Aorta (tissue), 5 donors: ENCODE measurements at regions of chr17 and their contacts with region 1.

Region 1: DNA sequence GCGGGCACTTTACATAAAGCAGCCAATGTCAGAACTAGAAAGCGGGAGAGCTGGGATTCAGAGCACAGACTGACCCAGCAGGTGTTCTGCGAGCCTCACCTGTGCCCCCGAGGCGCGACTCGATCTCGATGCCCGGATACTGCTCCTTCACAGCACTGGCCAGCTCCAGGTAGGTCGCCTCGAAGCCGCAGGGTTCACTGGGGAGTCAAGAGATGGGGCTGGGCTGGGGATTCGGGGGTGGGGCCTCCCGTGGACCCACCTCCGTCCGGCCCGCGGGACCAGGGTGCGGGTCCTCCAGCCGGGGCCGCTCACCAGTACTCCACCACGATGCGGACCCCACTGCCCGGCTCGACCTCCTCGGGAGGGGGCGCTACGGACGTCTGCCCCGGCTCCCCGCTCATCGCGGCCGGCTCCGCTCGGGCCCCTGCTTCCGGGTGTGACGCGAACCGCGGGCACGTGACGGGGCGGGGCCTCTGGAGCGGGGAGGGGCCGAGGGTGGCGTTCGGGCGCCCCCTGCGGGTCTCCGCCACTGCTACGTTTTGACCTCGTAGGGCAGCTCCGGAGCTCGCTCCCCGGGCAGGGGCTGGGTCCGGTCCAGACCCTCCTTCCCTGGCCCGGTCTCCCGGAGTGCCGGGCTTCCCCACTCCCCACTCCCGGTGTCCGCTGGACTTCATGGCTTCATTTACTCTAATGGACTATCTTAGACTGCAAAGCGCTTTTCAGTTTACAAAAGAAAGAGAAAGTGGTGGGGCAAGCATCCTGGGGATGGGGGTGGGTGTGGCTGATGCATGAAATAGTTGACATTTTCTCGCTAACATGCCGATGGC is at the start of gene MIEN1:
- DNase-seq: peak; percentile 93 to 98
- ATAC-seq: peak; percentile 98
- H3K4me3 ChIP-seq: peak within 1 kb of the TSS; percentile 34 to 66
- H3K27ac ChIP-seq: peak within 1 kb of the TSS in 1 of 2 donors; percentile 60
- H3K4me1 ChIP-seq: no peaks in the 10 kb centered on the region
- H3K27me3 ChIP-seq: no peaks in the 10 kb centered on the region
- total RNA-seq, gene MIEN1: 21.6 to 28.2 TPM

Region 2: GRCh38 chr17:39621523-39622379 is 108.6 kb before region 1 on chr17:
- intact Hi-C with region 1: loop called (anchors 5 kb)
- DNase-seq: peak; percentile 85 to 94
- ATAC-seq: peak; percentile 90
- H3K4me3 ChIP-seq: no peak overlapping the region
- H3K27ac ChIP-seq: no peak overlapping the region
- H3K4me1 ChIP-seq: no peaks in the 10 kb centered on the region
- H3K27me3 ChIP-seq: no peaks in the 10 kb centered on the region

Region 3: DNA sequence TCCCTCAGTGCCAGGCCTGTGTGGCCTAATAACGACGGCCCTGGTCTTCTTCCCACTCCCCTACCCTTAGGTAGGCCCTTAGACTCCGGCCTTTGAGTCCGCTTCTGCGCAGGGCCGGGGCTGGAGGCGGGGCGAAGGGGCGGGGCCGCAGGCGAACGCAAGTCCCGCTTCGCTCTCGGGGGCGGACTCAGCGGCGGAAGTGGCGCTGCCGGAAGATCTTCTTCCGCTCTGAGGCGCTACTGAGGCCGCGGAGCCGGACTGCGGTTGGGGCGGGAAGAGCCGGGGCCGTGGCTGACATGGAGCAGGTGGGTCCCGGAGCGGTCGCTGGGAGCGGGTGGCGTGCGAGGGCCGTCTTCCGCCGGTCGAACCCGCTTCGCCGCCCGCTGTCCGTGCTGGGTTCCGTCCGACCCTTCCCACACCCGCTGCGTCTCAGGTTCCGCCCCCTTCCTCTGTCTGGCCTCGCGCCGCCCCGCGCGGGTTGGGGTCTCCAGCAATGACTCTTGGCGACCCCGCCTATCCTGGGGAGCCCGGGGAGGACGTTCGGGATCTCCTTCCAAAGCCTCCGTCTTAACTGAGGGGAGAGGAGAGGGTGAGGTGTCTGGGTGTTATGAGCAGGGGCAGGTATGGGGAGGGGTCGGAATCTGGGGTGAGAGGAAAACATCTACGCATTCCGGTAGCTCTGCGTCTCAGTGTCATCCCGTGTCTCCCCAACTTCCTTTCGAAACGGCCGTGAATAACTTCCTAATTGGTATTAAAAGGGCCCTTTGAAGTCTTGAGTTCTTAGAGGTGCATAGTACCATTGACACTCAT is 93.2 kb before region 1 on chr17 and contains the start of gene STARD3:
- intact Hi-C with region 1: loop called (anchors 5 kb)
- DNase-seq: peak; percentile 96 to 98
- ATAC-seq: peak; percentile 94
- H3K4me3 ChIP-seq: peak within 1 kb of the TSS; percentile 78 to 91
- H3K27ac ChIP-seq: peak within 1 kb of the TSS in 1 of 2 donors; percentile 55
- H3K4me1 ChIP-seq: no peaks in the 10 kb centered on the region
- H3K27me3 ChIP-seq: no peaks in the 10 kb centered on the region
- total RNA-seq, gene STARD3: 34.7 to 58.1 TPM

Region 4: GRCh38 chr17:39668199-39668966 is 61.9 kb before region 1 on chr17 and contains the start of gene PNMT:
- intact Hi-C with region 1: loop called in 1 of 2 experiments (anchors 5 kb)
- DNase-seq: peak; percentile 80 to 93
- ATAC-seq: no peak
- H3K4me3 ChIP-seq: no peak within 1 kb of the TSS
- H3K27ac ChIP-seq: peak within 1 kb of the TSS in 1 of 2 donors; percentile 15
- H3K4me1 ChIP-seq: no peaks in the 10 kb centered on the region
- H3K27me3 ChIP-seq: no peaks in the 10 kb centered on the region
- total RNA-seq, gene PNMT: 0.75 to 1.5 TPM

Region 5: DNA sequence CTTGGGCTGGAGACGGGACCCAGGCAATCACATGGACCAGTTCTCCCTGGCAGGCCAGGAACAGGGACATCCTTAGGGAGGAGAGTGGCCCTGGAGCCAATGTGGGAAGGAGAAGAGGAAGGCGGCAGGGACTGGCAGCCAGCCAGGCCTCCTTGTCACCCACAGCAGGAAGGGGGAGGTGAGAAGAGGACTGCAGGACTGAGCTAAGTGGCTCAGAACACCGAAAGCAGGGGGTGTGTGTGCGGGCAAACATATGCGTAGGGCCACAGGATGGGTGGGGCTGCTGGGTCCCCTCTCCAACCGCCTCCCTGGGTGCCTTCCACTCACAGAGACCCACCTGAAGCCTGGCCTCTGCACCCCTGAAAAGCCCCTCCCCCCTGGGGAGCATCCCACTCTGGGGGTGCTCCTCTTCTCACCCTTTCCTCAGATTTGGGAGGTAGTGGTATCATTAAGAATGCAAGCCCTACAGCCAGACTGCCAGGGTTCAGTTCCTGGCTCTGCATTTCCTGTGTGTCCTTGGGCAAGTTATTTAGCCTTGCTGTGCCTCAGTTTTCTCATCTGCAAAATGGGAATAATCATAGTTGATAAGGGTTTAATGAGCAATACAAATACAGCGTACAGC is 54.0 kb before region 1 on chr17:
- intact Hi-C with region 1: loop called in 1 of 2 experiments (anchors 5 kb)
- DNase-seq: peak; percentile 84 to 90
- ATAC-seq: peak; percentile 33
- H3K4me3 ChIP-seq: no peak overlapping the region
- H3K27ac ChIP-seq: peak overlapping the region in 1 of 2 donors; percentile 77
- H3K4me1 ChIP-seq: peaks cover 0 to 3% of the 10 kb centered on the region in 2 donors
- H3K27me3 ChIP-seq: no peaks in the 10 kb centered on the region

Region 6: DNA sequence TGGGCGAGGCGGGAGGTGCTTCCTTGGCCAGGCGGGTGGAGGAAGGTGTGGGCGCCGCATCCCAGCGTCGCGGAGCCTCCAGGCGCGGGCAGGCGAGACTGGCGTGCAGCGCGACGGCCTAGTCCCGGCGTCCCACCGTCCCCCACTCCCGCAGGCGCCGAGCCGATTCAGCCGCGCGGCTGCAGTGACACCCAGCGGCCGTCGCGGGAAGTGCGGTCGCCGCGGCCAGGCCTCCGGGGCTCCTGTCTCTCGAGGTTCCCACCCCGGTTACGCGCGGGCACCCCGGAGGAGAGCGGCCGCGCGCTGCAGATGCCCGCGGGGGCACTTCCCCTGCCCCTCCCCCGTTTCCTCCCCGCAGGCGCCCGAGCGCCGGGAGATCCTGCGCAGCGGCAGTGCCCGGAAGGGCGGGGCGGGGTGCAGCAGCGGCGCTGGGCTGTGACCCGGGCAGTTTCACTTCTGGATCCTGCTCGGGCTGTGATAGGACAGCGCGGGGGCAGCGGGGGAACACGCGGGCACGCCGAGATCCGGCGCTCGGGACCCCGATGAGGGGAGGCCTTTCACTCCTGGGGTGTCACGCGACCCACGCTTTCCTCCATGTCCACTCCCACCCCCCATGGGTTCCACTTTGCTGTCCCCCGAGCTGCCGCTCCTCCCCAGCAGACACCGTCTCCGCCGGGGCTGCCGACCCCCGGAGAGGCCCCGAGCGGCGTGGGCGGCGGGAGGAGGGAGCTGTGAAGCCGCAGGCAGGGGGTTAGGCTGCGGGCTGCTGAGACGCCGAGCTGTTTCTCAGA is 24.0 kb after region 1 on chr17:
- intact Hi-C with region 1: loop called in 1 of 2 experiments (anchors 1 kb)
- DNase-seq: peak; percentile 97 to 98
- ATAC-seq: peak; percentile 95
- H3K4me3 ChIP-seq: peak overlapping the region; percentile 42 to 67
- H3K27ac ChIP-seq: peak overlapping the region; percentile 49 to 62
- H3K4me1 ChIP-seq: no peaks in the 10 kb centered on the region
- H3K27me3 ChIP-seq: no peaks in the 10 kb centered on the region

Region 7: GRCh38 chr17:39845052-39845846 is 114.9 kb after region 1 on chr17:
- intact Hi-C with region 1: no loop called
- DNase-seq: no peak
- ATAC-seq: no peak
- H3K4me3 ChIP-seq: no peak overlapping the region
- H3K27ac ChIP-seq: no peak overlapping the region
- H3K4me1 ChIP-seq: no peaks in the 10 kb centered on the region
- H3K27me3 ChIP-seq: peaks cover 0 to 4% of the 10 kb centered on the region in 2 donors

Region 8: GRCh38 chr17:40130352-40131042 is 400.2 kb after region 1 on chr17:
- intact Hi-C with region 1: no loop called
- DNase-seq: peak in 1 of 2 donors; percentile 59
- ATAC-seq: no peak
- H3K4me3 ChIP-seq: no peak overlapping the region
- H3K27ac ChIP-seq: no peak overlapping the region
- H3K4me1 ChIP-seq: no peaks in the 10 kb centered on the region
- H3K27me3 ChIP-seq: no peaks in the 10 kb centered on the region